CD4-positive, alpha-beta memory T cell (primary cell): ENCODE measurements at regions of chr2 and their contacts with region 1.

Region 1: GRCh38 chr2:70964596-70965386 is 13.6 kb upstream of the ANKRD53 start:
- DNase-seq: peak; percentile 77 to 81 (median 78)
- H3K4me3 ChIP-seq: peak overlapping the region in 1 of 2 donors; percentile 55
- H3K4me3 Mint-ChIP-seq: peak overlapping the region; percentile 80 to 91 (median 87)
- H3K27ac ChIP-seq: no peak overlapping the region
- H3K27ac Mint-ChIP-seq: peak overlapping the region in 6 of 7 donors; percentile 2 to 87 (median 71)
- H3K4me1 ChIP-seq: peaks cover 5% of the 10 kb centered on the region
- H3K4me1 Mint-ChIP-seq: peaks cover 2 to 10% (median 6%) of the 10 kb centered on the region in 4 donors
- H3K27me3 ChIP-seq: peaks cover 7% of the 10 kb centered on the region
- H3K27me3 Mint-ChIP-seq: peaks cover 8 to 28% of the 10 kb centered on the region in 2 donors

Region 2: GRCh38 chr2:70643715-70644114 is 321.1 kb before region 1 on chr2:
- CTCF ChIA-PET with region 1: no interaction called
- POLR2A ChIA-PET with region 1: no interaction called
- intact Hi-C with region 1: no loop called
- DNase-seq: peak in 2 of 5 donors; percentile 10 to 34
- H3K4me3 ChIP-seq: no peak overlapping the region
- H3K4me3 Mint-ChIP-seq: no peak overlapping the region
- H3K27ac ChIP-seq: no peak overlapping the region
- H3K27ac Mint-ChIP-seq: no peak overlapping the region
- H3K4me1 ChIP-seq: peaks cover 23% of the 10 kb centered on the region
- H3K4me1 Mint-ChIP-seq: peaks cover 12 to 24% (median 17%) of the 10 kb centered on the region in 4 donors
- H3K27me3 ChIP-seq: no peaks in the 10 kb centered on the region
- H3K27me3 Mint-ChIP-seq: no peaks in the 10 kb centered on the region

Region 3: GRCh38 chr2:70806013-70806412 is 158.8 kb before region 1 on chr2:
- CTCF ChIA-PET with region 1: no interaction called
- POLR2A ChIA-PET with region 1: no interaction called
- intact Hi-C with region 1: no loop called
- DNase-seq: no peak
- H3K4me3 ChIP-seq: no peak overlapping the region
- H3K4me3 Mint-ChIP-seq: no peak overlapping the region
- H3K27ac ChIP-seq: no peak overlapping the region
- H3K27ac Mint-ChIP-seq: no peak overlapping the region
- H3K4me1 ChIP-seq: no peaks in the 10 kb centered on the region
- H3K4me1 Mint-ChIP-seq: peaks cover 0 to 1% (median 0%) of the 10 kb centered on the region in 4 donors
- H3K27me3 ChIP-seq: no peaks in the 10 kb centered on the region
- H3K27me3 Mint-ChIP-seq: peaks cover 2 to 5% of the 10 kb centered on the region in 2 donors

Region 4: DNA sequence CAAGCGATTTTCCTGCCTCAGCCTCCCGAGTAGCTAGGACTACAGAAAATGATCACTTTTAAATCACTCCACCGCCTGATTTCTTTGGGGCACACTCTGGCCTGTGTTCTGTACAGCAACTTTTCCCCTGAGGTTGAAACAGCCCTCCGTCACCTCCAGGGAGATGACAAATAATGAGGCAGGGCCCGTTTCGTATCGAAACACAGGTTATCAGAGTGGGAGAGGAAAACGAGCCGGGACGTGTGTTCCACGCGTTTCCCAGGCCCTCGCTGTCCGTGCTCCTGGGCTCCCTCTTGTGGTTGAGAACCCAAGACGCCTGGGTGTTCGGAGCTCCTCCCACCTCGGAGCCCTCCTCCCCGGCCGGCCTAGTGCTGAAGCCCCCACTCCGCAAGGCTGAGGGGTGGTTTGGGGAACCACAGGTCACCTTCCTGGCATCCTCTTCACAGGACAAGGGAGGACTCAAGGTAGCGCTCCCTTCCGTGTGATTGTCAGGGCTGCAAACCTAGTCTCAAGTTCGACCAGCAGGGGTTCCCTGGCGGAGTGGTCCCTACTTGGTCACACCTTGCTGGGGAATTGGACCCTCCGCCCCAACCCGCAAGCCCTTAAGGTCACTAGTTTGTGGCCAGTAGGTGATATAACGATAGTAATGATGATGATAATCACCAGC is 16.3 kb before region 1 on chr2:
- CTCF ChIA-PET with region 1: interaction called, 24 read pairs
- POLR2A ChIA-PET with region 1: no interaction called
- intact Hi-C with region 1: no loop called
- DNase-seq: peak; percentile 62 to 74 (median 72)
- H3K4me3 ChIP-seq: peak overlapping the region; percentile 6 to 36
- H3K4me3 Mint-ChIP-seq: peak overlapping the region; percentile 78 to 92 (median 84)
- H3K27ac ChIP-seq: no peak overlapping the region
- H3K27ac Mint-ChIP-seq: peak overlapping the region in 3 of 7 donors; percentile 5 to 87 (median 78)
- H3K4me1 ChIP-seq: peaks cover 8% of the 10 kb centered on the region
- H3K4me1 Mint-ChIP-seq: peaks cover 8 to 17% (median 13%) of the 10 kb centered on the region in 4 donors
- H3K27me3 ChIP-seq: peaks cover 5% of the 10 kb centered on the region
- H3K27me3 Mint-ChIP-seq: peaks cover 7 to 9% of the 10 kb centered on the region in 2 donors

Region 5: GRCh38 chr2:70977605-70978205 is 12.9 kb after region 1 on chr2:
- CTCF ChIA-PET with region 1: interaction called, 71 read pairs
- POLR2A ChIA-PET with region 1: interaction called, 5 read pairs
- intact Hi-C with region 1: loop called (anchors 1 kb)
- DNase-seq: peak in 3 of 5 donors; percentile 13 to 54 (median 22)
- H3K4me3 ChIP-seq: peak overlapping the region; percentile 65 to 76
- H3K4me3 Mint-ChIP-seq: peak overlapping the region; percentile 88 to 95 (median 90)
- H3K27ac ChIP-seq: peak overlapping the region; percentile 60
- H3K27ac Mint-ChIP-seq: peak overlapping the region; percentile 86 to 97 (median 93)
- H3K4me1 ChIP-seq: peaks cover 11% of the 10 kb centered on the region
- H3K4me1 Mint-ChIP-seq: peaks cover 10 to 25% (median 17%) of the 10 kb centered on the region in 4 donors
- H3K27me3 ChIP-seq: no peaks in the 10 kb centered on the region
- H3K27me3 Mint-ChIP-seq: peaks cover 0 to 2% of the 10 kb centered on the region in 2 donors

Region 6: GRCh38 chr2:70984576-70985282 is 19.9 kb after region 1 on chr2:
- CTCF ChIA-PET with region 1: interaction called, 71 read pairs
- POLR2A ChIA-PET with region 1: interaction called, 5 read pairs
- intact Hi-C with region 1: loop called (anchors 2 kb)
- DNase-seq: peak; percentile 77 to 80 (median 79)
- H3K4me3 ChIP-seq: no peak overlapping the region
- H3K4me3 Mint-ChIP-seq: peak overlapping the region in 6 of 8 donors; percentile 6 to 51 (median 38)
- H3K27ac ChIP-seq: no peak overlapping the region
- H3K27ac Mint-ChIP-seq: peak overlapping the region in 3 of 7 donors; percentile 9 to 29 (median 27)
- H3K4me1 ChIP-seq: peaks cover 8% of the 10 kb centered on the region
- H3K4me1 Mint-ChIP-seq: peaks cover 9 to 30% (median 15%) of the 10 kb centered on the region in 4 donors
- H3K27me3 ChIP-seq: no peaks in the 10 kb centered on the region
- H3K27me3 Mint-ChIP-seq: no peaks in the 10 kb centered on the region

Region 7: DNA sequence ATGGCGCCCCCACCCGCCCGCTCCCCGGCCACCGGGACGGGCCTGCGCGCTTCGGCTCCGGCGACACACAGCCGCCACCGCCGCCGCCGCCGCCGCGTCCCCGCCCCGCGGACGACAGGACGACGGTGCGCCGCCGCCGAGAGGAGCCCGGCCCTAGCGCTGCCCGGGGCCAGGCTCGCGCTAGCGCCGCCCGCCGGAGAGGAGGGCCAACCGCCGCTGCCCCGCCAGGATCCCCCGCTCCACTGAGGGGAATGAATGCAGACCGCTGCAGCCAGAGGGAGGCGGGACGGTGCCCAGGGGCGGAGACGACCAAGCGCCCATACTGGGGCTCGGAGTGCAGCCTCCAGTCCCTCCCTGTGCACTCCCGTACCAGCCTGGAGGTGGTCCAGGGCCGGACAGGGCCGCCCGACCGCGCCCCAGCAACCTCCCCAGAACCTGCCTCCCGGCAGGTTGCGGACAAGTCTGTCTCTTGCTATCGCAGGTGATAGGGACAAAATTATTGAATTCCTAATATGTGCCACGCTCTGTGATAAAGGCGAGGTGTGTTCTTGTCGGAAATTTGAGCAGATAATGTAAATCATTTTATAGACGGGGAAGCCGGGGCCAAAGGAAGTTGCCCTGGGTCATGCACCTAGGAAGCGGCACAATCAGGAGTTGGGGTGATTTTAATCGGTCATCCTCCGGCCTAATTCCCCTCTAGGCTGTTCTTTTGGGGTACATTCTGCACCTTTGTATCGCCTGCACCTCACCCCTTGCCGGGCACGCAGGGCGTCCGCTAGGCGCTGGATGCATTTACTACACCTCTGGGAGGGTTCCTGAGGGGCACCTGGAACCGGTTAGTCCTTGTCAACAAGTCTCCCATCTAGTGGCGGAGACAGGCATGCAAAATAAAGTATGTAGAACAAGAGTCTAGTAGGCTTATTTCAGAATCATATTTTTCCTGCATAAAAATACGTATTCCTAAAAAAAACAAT is 30.3 kb after region 1 on chr2 and contains the start of gene TEX261:
- CTCF ChIA-PET with region 1: interaction called, 33 read pairs
- POLR2A ChIA-PET with region 1: no interaction called
- intact Hi-C with region 1: loop called (anchors 1 kb)
- DNase-seq: peak; percentile 88 to 91 (median 89)
- H3K4me3 ChIP-seq: peak within 1 kb of the TSS; percentile 68 to 87
- H3K4me3 Mint-ChIP-seq: peak within 1 kb of the TSS; percentile 95 to 99 (median 96)
- H3K27ac ChIP-seq: peak within 1 kb of the TSS; percentile 81
- H3K27ac Mint-ChIP-seq: peak within 1 kb of the TSS; percentile 91 to 98 (median 95)
- H3K4me1 ChIP-seq: peaks cover 26% of the 10 kb centered on the region
- H3K4me1 Mint-ChIP-seq: peaks cover 24 to 40% (median 32%) of the 10 kb centered on the region in 4 donors
- H3K27me3 ChIP-seq: no peaks in the 10 kb centered on the region
- H3K27me3 Mint-ChIP-seq: no peaks in the 10 kb centered on the region
- total RNA-seq, gene TEX261: 61.1 to 70.0 TPM

Region 8: DNA sequence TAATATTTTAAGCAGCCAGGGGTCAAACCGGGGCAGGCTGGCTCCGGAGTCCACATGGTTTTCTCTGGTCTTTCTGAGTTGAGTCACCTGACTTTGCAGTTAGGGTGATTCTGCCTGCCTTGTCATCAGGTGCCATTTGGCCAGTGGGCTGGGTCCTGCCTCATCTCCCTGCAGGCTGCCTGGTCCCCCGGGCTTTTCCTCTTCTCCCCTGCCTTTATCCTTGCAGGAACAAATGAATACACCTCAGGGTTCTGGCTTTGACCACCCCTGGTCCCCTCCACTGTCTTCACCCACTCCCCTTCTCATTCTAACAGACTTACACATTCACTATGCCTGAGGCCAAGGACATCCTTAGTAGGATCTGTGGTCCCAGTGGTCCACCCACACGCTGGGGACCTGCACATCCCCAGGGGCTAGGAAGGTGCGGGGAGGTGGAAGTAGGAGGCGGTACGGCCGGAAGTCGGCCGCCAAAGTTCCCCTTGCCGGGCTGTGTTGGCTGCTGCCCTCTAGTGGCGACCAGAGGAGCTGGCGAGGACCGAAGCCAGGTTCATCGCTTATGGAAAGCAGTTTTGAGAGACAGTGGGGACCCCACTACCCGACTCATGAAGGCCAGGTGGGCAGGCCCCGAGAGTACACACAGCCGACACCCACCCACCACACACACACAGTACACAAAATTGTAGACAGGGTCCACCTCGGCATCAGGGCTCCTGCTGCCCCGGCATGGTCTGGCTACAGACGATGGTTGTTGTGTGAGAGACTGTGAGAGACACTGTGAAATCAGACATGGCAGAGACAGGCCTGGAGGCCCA is 36.2 kb after region 1 on chr2:
- CTCF ChIA-PET with region 1: interaction called, 33 read pairs
- POLR2A ChIA-PET with region 1: no interaction called
- intact Hi-C with region 1: loop called (anchors 1 kb)
- DNase-seq: peak; percentile 76 to 78 (median 76)
- H3K4me3 ChIP-seq: peak overlapping the region in 1 of 2 donors; percentile 13
- H3K4me3 Mint-ChIP-seq: peak overlapping the region; percentile 23 to 75 (median 58)
- H3K27ac ChIP-seq: no peak overlapping the region
- H3K27ac Mint-ChIP-seq: peak overlapping the region in 5 of 7 donors; percentile 24 to 85 (median 66)
- H3K4me1 ChIP-seq: peaks cover 15% of the 10 kb centered on the region
- H3K4me1 Mint-ChIP-seq: peaks cover 4 to 13% (median 11%) of the 10 kb centered on the region in 4 donors
- H3K27me3 ChIP-seq: no peaks in the 10 kb centered on the region
- H3K27me3 Mint-ChIP-seq: peaks cover 1 to 2% of the 10 kb centered on the region in 2 donors